CD4-positive, alpha-beta memory T cell (primary cell): ENCODE measurements at regions of chr16 and their contacts with region 1.

Region 1: DNA sequence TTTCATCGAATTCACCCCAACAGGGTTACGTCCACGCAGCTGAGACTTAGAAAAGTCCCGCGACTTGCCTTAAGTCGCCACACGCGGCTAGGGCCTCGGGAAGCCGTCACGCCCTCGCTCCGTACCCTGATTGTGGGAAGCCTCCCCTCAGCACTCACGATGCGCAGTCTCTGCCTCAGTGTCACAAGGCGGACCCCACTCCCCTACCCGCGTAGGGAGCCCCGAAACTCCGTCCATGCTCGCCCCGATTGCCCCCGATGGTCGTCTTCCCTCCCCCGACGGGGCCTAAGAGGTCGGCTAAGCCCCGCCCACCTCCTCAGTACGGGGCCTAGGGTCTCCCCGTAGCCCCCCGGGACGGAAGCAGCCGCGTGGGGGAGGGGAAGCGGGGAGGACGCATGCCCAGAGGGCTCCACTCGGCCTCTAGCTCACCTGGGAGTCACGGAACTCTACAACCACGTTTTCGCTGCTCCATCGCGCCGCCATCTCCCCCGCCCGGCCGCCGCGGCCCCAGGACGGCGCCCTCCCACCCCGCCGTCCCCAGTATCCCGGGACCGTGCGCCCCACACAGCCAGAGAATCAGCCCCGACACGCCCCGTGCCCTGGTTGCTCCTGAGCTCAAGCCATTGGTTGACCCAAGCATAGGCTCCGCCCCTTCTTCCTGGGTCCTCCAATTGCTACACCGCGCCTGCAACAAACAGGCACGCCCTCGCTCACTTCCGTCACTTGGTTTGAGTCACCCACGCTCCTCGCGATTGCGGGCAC is at the start of gene WDR59:
- DNase-seq: peak; percentile 97 to 100 (median 99)
- H3K4me3 ChIP-seq: peak within 1 kb of the TSS; percentile 90 to 96
- H3K4me3 Mint-ChIP-seq: peak within 1 kb of the TSS; percentile 93 to 98 (median 96)
- H3K27ac ChIP-seq: peak within 1 kb of the TSS; percentile 87
- H3K27ac Mint-ChIP-seq: peak within 1 kb of the TSS; percentile 84 to 99 (median 95)
- H3K4me1 ChIP-seq: peaks cover 18% of the 10 kb centered on the region
- H3K4me1 Mint-ChIP-seq: peaks cover 8 to 29% (median 19%) of the 10 kb centered on the region in 4 donors
- H3K27me3 ChIP-seq: no peaks in the 10 kb centered on the region
- H3K27me3 Mint-ChIP-seq: no peaks in the 10 kb centered on the region
- total RNA-seq, gene WDR59: 116 to 127 TPM

Region 2: DNA sequence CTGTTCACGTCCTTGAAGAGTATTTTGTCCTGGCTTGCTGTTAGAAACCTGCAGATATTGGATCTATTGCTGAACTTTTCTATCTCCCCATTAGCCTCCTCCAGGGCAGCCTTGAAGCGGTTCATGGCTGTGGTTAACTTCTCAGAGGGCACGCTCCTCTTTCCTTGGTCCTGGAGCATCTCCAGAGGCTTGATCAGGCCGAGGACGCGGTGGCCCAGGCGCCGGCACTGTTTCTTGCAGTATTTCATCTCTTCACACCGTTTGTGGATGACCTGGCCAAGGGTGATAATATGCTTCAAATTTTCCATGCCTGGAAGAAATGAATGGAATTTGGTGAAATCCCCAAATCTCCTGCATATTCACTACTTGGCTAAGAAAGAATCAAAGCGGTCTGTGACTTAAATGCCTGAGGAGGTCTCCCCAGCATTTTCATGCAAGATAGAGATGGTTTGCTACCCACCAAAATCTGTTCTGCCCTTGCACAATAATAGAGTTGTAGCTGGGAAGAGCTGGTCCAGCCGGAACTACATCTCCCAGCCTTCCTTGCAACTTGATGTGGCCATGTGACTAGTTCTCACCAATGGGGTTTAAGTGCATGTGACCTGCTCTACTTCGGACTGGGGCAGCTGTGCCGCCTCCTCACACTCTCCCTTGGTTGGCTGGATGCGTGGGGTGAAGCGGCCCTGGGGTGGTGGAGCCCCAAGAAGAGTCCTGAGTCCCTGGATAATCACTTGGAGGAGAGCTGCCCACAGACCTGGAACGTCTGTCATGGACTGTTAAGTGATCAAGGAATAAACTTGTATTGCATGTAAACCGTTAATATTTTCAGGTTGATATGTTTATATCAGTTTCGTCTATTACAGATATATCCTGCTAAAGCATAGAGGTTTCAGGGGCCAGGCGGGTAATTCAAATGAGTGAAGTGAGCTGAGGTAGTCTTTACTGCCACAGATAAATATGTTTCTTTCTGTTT is 289.0 kb before region 1 on chr16:
- CTCF ChIA-PET with region 1: no interaction called
- POLR2A ChIA-PET with region 1: no interaction called
- intact Hi-C with region 1: loop called (anchors 5 kb)
- DNase-seq: peak; percentile 63 to 72 (median 67)
- H3K4me3 ChIP-seq: peak overlapping the region; percentile 24 to 46
- H3K4me3 Mint-ChIP-seq: peak overlapping the region; percentile 79 to 88 (median 86)
- H3K27ac ChIP-seq: peak overlapping the region; percentile 0
- H3K27ac Mint-ChIP-seq: peak overlapping the region; percentile 53 to 90 (median 84)
- H3K4me1 ChIP-seq: peaks cover 34% of the 10 kb centered on the region
- H3K4me1 Mint-ChIP-seq: peaks cover 31 to 66% (median 48%) of the 10 kb centered on the region in 4 donors
- H3K27me3 ChIP-seq: no peaks in the 10 kb centered on the region
- H3K27me3 Mint-ChIP-seq: no peaks in the 10 kb centered on the region

Region 3: DNA sequence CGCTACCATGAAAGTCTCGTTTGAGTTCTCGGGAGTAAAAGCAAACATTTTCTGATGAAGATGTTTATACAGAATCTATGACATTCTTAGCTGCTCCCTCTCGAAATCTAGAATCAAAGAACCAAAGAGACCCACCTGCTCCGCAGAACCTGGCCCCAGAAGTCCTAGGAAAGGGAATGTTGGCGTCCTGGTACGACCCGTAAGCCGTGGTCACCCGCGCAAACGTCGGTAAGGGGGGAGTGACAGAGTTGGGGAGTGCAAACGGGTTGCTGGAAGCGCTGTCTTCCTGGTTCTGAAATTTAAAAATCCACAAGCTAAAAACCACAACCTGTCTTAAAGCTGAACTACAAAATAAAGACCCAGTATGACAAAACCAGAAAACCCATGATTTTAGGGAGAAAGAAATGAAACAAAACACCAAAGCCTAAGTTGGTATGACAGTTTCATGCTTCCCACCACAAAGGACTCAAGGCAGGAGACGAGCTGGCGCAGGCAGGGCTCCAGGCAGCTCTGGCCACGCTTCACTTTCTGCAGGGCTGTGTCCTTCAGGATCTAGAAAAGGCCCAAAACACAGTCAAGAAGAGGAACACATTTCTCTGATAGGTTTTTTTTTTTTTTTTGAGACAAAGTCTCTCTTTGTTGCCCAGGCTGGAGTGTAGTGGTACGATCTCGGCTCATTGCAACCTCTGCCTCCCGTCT is 75.2 kb before region 1 on chr16:
- CTCF ChIA-PET with region 1: no interaction called
- POLR2A ChIA-PET with region 1: no interaction called
- intact Hi-C with region 1: no loop called
- DNase-seq: no peak
- H3K4me3 ChIP-seq: no peak overlapping the region
- H3K4me3 Mint-ChIP-seq: peak overlapping the region in 7 of 8 donors; percentile 17 to 72 (median 63)
- H3K27ac ChIP-seq: no peak overlapping the region
- H3K27ac Mint-ChIP-seq: peak overlapping the region in 1 of 7 donors; percentile 62
- H3K4me1 ChIP-seq: no peaks in the 10 kb centered on the region
- H3K4me1 Mint-ChIP-seq: peaks cover 0 to 2% (median 0%) of the 10 kb centered on the region in 4 donors
- H3K27me3 ChIP-seq: no peaks in the 10 kb centered on the region
- H3K27me3 Mint-ChIP-seq: no peaks in the 10 kb centered on the region

Region 4: GRCh38 chr16:75148311-75149195 is 163.8 kb after region 1 on chr16 and contains the start of gene ZFP1:
- CTCF ChIA-PET with region 1: no interaction called
- POLR2A ChIA-PET with region 1: interaction called, 5 read pairs
- intact Hi-C with region 1: loop called (anchors 1 kb)
- DNase-seq: peak; percentile 92 to 96 (median 93)
- H3K4me3 ChIP-seq: peak within 1 kb of the TSS; percentile 44 to 95
- H3K4me3 Mint-ChIP-seq: peak within 1 kb of the TSS; percentile 82 to 91 (median 88)
- H3K27ac ChIP-seq: peak within 1 kb of the TSS; percentile 75
- H3K27ac Mint-ChIP-seq: peak within 1 kb of the TSS; percentile 75 to 93 (median 91)
- H3K4me1 ChIP-seq: peaks cover 5% of the 10 kb centered on the region
- H3K4me1 Mint-ChIP-seq: peaks cover 8 to 23% (median 13%) of the 10 kb centered on the region in 4 donors
- H3K27me3 ChIP-seq: no peaks in the 10 kb centered on the region
- H3K27me3 Mint-ChIP-seq: no peaks in the 10 kb centered on the region
- total RNA-seq, gene ZFP1: 11.7 to 13.4 TPM